BJ (cell line): ENCODE measurements at regions of chr22 and their contacts with region 1.

Region 1: DNA sequence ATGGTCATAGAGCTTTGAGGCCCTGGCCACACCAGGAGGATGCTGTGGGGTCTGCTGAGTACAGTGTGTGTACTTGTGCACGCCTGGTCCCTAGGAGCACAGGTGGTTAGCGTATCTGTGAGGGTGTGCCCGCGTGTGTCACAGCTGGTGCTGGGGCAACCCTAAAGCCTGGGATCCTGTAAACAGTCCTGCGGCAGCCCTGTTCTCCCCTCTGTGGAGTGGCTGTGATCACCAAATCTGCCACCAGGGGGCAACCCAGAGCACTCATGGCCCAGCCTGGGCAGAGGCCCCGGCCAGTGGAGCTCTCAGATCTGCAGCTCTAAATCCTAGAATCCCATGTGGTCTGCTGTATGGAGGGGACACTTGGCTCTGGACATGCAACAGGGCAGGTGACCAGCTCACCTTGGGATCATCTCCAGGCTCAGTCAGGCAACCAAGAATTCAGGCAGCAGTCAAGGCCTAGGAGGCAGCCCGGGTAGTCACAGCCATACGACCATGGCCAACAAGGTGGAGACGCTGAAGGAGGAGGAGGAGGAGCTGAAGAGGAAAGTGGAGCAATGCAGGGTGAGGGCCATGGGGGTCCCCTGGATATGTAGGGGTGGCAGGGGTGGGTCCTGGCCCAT is 3.9 kb downstream of the SH3BP1 start:
- DNase-seq: no peak
- H3K4me3 ChIP-seq: no peak overlapping the region
- H3K27me3 ChIP-seq: no peaks in the 10 kb centered on the region
- CTCF ChIP-seq: peak; percentile 91

Region 2: DNA sequence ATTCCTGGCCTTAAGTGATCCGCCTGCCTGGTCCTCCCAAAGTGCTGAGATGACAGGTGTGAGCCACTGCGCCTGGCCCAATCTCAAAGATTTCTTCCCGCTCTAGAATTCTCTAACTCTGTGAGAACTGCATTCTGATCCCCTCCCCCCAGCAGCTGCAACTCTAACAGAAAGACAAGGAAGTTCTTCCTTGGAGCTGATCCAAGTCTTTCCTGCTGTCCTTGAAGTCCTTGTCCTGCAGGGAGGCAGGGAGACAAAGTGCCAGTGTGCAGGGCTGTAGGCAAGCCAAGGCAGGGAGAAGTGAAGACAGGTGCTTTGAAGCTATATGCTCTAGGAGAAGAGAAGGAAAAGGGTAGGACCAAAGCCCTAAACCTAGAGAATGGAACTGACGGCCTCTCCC is 44.2 kb before region 1 on chr22:
- CTCF ChIA-PET with region 1: no interaction called
- POLR2A ChIA-PET with region 1: no interaction called
- DNase-seq: no peak
- H3K4me3 ChIP-seq: no peak overlapping the region
- H3K27me3 ChIP-seq: no peaks in the 10 kb centered on the region; the same call in 1 of the 2 replicates
- CTCF ChIP-seq: no peak

Region 3: GRCh38 chr22:37658133-37659065 is 15.1 kb after region 1 on chr22 and contains the start of gene PDXP:
- CTCF ChIA-PET with region 1: interaction called, 122 read pairs
- POLR2A ChIA-PET with region 1: no interaction called
- DNase-seq: peak; percentile 99
- H3K4me3 ChIP-seq: peak within 1 kb of the TSS; percentile 72
- H3K27me3 ChIP-seq: no peaks in the 10 kb centered on the region
- CTCF ChIP-seq: no peak
- polyA plus RNA-seq, gene PDXP: 16.4 and 24.0 TPM in 2 replicates

Region 4: DNA sequence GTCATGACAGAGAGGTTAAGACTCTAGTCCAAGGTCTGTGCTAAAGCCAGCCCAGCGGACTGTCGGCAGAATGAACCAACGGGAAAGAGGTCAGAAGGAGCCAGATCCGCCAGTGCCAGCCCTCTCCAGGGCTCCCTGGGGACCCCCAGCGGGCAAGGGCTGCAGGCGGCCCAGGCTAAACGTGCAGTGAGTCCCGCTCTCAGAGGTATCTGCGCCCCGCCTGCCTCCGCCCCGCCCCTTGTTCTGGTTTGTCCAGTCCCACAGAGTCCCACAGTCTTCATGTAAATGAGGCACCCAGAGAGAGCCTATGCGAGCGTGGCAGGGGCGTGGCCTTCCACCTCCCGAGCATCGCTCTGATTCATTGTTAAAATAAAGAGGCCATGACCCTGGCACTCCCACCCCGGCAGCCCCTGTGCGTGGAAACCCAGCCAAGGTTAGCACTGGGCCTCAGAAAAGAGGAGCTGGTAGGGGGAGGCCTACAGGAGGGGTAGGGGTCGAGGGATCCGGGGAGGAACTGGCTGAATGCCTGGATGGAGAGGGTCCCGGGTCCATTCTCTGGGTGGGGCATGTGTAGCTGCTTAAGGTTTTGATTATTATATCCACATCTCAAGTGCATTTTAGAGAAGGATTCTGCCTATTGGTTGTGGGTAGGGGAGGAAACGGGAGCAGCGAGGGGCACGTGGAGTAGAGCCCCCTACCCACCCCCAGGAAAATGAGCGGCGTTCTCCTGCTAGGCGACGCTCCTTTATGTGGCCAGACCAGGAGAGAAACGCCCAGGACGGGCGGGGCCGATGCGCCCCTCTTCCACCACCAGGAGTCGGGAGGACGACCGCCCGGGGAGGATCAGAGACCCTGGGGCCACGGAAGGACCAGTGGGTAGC is 53.6 kb after region 1 on chr22 and contains the start of gene TRIOBP:
- CTCF ChIA-PET with region 1: interaction called, 15 read pairs
- POLR2A ChIA-PET with region 1: no interaction called
- DNase-seq: peak; percentile 71
- H3K4me3 ChIP-seq: peak within 1 kb of the TSS; percentile 13; the same call in 1 of the 2 replicates
- H3K27me3 ChIP-seq: no peaks in the 10 kb centered on the region
- CTCF ChIP-seq: peak; percentile 73
- polyA plus RNA-seq, gene TRIOBP: 52.0 and 73.9 TPM in 2 replicates

Region 5: GRCh38 chr22:37792494-37792893 is 149.2 kb after region 1 on chr22:
- CTCF ChIA-PET with region 1: interaction called, 32 read pairs
- POLR2A ChIA-PET with region 1: no interaction called
- DNase-seq: no peak
- H3K4me3 ChIP-seq: no peak overlapping the region
- H3K27me3 ChIP-seq: no peaks in the 10 kb centered on the region
- CTCF ChIP-seq: no peak

Region 6: GRCh38 chr22:37832022-37832857 is 188.9 kb after region 1 on chr22:
- CTCF ChIA-PET with region 1: no interaction called
- POLR2A ChIA-PET with region 1: no interaction called
- DNase-seq: no peak
- H3K4me3 ChIP-seq: no peak overlapping the region
- H3K27me3 ChIP-seq: no peaks in the 10 kb centered on the region
- CTCF ChIP-seq: no peak